PC-3 (cell line): ENCODE measurements at regions of chr11 and their contacts with region 1.

Region 1: GRCh38 chr11:122814401-122814800 is 23.9 kb upstream of the CRTAM start:
- DNase-seq: peak; percentile 48
- ATAC-seq: peak; percentile 42
- H3K4me3 ChIP-seq: no peak overlapping the region
- H3K27ac ChIP-seq: no peak overlapping the region
- H3K4me1 ChIP-seq: peaks cover 20% of the 10 kb centered on the region
- H3K27me3 ChIP-seq: no peaks in the 10 kb centered on the region
- CTCF ChIP-seq: peak; percentile 75

Region 2: DNA sequence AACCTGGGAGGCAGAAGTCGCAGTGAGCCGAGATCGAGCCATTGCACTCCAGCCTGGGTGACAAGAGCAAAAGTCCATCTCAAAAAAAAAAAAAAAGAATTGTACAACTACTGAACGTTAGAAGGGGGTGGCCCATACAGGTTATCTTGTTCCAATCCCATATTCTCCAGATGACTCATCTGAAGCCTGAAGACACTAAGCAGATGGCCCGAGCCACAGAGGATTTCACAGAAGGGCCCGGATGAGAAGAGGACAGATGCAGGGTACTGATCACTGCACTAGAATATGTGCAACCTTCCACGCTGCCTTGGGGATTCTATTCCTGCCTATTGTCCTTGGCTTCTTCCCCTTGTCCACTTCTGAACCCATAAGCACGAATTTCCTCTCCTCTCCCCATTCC is 229.7 kb before region 1 on chr11:
- CTCF ChIA-PET with region 1: interaction called, 12 read pairs
- POLR2A ChIA-PET with region 1: no interaction called
- intact Hi-C with region 1: no loop called
- DNase-seq: no peak
- ATAC-seq: no peak
- H3K4me3 ChIP-seq: no peak overlapping the region
- H3K27ac ChIP-seq: no peak overlapping the region
- H3K4me1 ChIP-seq: peaks cover 9% of the 10 kb centered on the region
- H3K27me3 ChIP-seq: peaks cover 11% of the 10 kb centered on the region; the same call in 1 of the 2 replicates
- CTCF ChIP-seq: no peak